Endothelial cell of umbilical vein (primary cell): ENCODE measurements at regions of chr13 and their contacts with region 1.

Region 1: GRCh38 chr13:28468023-28468915 is 26.7 kb downstream of the FLT1 start:
- DNase-seq: no peak
- H3K4me3 ChIP-seq: no peak overlapping the region
- H3K27ac ChIP-seq: no peak overlapping the region
- H3K4me1 ChIP-seq: peaks cover 57% of the 10 kb centered on the region
- H3K27me3 ChIP-seq: no peaks in the 10 kb centered on the region
- CTCF ChIP-seq: no peak
- POLR2A ChIP-seq: no peak

Region 2: DNA sequence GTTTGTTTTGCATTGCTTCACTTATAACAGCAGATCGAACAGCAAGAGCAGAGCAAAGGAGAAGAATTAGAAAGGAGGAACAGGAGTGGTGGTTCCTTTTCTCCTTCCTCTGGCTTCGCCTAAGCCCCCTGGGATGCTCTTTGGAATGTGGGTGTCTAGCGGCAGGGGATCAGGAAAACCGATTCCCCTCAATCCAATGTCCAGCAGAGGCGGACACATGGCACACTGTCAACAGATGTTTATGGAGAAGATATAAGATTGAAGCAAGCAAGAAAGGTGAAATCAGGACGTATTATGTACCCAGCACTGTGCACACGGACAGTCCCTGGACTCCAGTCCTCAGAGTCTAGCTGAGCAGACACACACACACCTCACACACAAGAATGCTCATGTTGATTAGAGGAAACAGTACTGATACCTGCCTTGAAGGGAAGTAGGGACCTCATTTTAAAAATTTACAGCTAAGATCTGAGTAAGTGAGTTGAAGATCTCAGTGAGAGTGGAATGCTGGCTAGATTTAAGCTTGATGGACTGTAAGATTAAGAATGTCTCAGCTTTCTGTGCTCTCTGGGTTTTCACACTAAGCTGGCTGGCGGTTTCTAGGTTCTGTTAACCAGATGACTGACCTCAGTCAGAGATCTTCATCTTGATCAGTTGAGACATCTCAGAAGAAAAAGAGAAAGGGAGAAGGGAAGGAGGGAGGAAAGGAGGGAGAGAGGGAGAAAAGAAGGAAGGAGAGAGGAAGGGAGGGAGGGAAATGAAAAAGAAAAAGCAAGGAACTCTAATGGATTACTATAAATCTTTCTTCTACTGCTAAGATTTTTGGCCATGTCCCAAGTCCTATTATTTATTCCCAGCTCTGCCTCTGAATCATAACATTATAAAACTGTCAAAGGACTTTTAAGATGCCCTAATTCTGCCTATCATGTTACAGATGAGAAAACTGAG is 18.2 kb before region 1 on chr13:
- CTCF ChIA-PET with region 1: interaction called, 12 read pairs
- POLR2A ChIA-PET with region 1: interaction called, 5 read pairs
- dilution Hi-C with region 1: no loop called
- intact Hi-C with region 1: no loop called
- DNase-seq: peak; percentile 77
- H3K4me3 ChIP-seq: no peak overlapping the region
- H3K27ac ChIP-seq: peak overlapping the region; percentile 58
- H3K4me1 ChIP-seq: peaks cover 28% of the 10 kb centered on the region
- H3K27me3 ChIP-seq: no peaks in the 10 kb centered on the region
- CTCF ChIP-seq: no peak
- POLR2A ChIP-seq: no peak

Region 3: GRCh38 chr13:28531077-28531844 is 63.0 kb after region 1 on chr13:
- CTCF ChIA-PET with region 1: interaction called, 3 read pairs
- POLR2A ChIA-PET with region 1: no interaction called
- dilution Hi-C with region 1: no loop called
- intact Hi-C with region 1: loop called (anchors 5 kb)
- DNase-seq: peak; percentile 85
- H3K4me3 ChIP-seq: peak overlapping the region in 2 of 3 experiments; percentile 45
- H3K27ac ChIP-seq: peak overlapping the region; percentile 36
- H3K4me1 ChIP-seq: peaks cover 14% of the 10 kb centered on the region
- H3K27me3 ChIP-seq: no peaks in the 10 kb centered on the region
- CTCF ChIP-seq: no peak
- POLR2A ChIP-seq: no peak